Activated CD4-positive, alpha-beta memory T cell treated with anti-CD3 and anti-CD28 coated beads, Interleukin-2, amount 10 ng/mL, durations not matched to agents 7 days and 5 days (primary cell): ENCODE measurements at regions of chr11 and their contacts with region 1.

Region 1: DNA sequence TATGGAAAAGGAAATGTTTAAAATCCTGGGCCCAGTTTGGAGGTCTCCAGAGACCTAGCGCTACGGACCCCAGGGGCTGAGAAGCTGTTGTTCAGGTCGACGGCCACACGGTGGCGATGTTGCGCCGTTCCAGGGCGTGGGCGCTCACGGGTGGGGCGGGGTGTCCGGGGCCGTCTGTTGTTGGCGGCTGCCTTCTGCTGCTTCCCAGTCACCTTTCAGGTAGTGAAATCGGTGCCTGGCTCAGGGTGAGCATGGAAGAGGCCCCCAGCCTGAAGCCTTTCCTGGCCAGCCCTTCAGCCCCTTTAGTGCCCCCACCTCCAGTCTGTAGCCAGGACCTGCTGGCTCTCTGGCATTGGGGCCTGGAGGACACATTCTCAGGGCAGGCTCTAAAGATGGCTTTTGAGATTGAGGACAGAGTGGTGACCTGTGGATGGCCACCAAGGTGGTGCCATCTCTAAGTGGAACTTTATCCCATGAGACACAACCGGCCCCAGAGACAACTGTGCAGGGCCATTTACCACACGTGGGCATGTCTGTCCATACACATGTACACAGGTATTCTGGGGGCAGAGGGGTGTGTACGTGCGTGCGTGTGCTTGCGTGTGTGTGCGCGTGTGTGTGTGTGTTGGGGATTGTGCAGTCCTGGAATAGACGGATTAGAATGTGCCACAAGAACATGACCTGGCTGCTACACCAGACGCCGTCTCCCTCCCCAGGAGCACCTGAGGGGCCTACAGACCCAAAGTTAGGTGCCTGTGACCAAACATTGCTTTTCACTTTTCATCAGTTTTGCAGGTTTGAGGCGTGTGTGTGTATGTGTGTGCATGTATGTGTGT is 53.8 kb downstream of the ST14 start:
- DNase-seq: peak; percentile 71
- H3K4me3 Mint-ChIP-seq: no peak overlapping the region
- H3K27ac Mint-ChIP-seq: no peak overlapping the region
- H3K4me1 Mint-ChIP-seq: no peaks in the 10 kb centered on the region
- H3K27me3 Mint-ChIP-seq: peaks cover 4% of the 10 kb centered on the region

Region 2: DNA sequence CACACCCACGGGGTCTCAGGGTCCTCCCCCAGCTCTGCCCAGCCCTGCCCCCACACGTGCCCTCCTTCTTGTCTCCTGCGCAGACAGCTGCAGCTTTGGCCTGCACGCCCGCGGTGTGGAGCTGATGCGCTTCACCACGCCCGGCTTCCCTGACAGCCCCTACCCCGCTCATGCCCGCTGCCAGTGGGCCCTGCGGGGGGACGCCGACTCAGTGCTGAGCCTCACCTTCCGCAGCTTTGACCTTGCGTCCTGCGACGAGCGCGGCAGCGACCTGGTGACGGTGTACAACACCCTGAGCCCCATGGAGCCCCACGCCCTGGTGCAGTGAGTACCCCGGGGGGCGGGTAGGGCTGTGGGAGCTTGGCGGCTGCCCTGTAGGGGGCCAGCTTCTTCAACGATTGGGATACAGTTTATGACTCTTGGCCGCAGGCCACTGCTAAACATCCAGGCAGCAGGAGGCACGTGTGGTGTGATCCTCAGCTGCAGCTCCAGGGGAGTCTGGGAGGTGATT is 22.9 kb before region 1 on chr11:
- CTCF ChIA-PET with region 1: no interaction called
- POLR2A ChIA-PET with region 1: no interaction called
- DNase-seq: no peak
- H3K4me3 Mint-ChIP-seq: no peak overlapping the region
- H3K27ac Mint-ChIP-seq: no peak overlapping the region
- H3K4me1 Mint-ChIP-seq: no peaks in the 10 kb centered on the region
- H3K27me3 Mint-ChIP-seq: peaks cover 1% of the 10 kb centered on the region

Region 3: DNA sequence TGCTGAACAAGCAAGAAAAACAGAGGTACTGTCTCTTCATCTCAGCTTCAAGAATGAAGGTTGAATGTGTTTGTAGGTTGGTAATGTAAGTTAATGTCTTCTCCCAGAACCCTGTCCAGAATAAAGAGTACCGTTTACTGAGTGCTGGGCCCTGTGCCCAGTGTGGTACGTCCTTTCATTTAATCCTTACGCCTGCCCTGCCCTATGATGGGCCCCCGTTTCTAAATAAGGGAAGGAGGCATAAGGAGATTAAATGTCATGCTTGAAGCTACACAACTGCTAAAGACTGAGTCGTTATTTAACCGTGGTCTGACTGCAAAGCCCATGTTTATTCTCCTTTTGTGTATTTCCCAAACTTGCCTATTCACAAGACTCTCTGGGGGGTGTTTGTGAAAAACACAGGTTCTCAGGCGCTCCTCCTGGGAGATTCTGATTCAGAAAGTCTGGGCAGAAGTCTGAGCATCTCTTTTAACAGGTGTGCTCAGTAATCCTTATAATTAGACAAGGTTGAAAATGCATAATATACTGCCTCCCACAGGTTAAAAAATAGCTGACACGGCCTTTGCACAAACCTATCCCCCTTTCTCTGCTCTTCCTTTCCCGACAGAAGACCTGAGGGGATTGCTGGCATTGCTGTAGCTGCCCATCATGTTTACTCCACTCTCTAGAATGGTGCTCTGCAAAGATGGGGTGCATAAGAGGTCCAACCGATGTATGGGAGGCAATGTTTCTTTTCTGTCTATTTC is 157.7 kb after region 1 on chr11:
- CTCF ChIA-PET with region 1: interaction called, 19 read pairs
- POLR2A ChIA-PET with region 1: no interaction called
- DNase-seq: no peak
- H3K4me3 Mint-ChIP-seq: no peak overlapping the region
- H3K27ac Mint-ChIP-seq: no peak overlapping the region
- H3K4me1 Mint-ChIP-seq: no peaks in the 10 kb centered on the region
- H3K27me3 Mint-ChIP-seq: peaks cover 4% of the 10 kb centered on the region